Heart right ventricle (tissue), 16 donors: ENCODE measurements at regions of chr6 and their contacts with region 1.

Region 1: DNA sequence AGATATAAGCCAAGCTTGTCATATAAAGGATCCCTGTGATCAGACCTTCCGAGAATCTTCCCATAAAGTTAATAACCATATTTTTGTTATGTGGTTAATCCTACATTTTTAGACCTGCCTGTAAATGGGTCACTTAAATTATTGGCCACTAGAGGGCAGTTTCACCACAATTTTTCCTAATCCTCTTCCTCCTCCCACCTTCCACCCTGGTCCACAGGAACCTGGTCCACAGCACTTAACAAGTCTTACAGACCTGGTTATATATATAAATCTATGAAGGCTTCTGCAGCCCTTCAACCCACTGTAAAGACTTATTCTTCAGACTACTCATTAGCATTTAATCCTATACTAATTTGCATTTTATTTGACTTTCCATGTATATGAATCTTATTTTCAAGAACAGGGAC is 28.3 kb downstream of the MRS2 start:
- DNase-seq: peak in 1 of 2 donors; percentile 9
- ATAC-seq: peak in 4 of 8 donors; percentile 56 to 63 (median 60)
- H3K4me3 ChIP-seq: no peak overlapping the region
- H3K27ac ChIP-seq: no peak overlapping the region
- H3K4me1 ChIP-seq: no peaks in the 10 kb centered on the region
- H3K27me3 ChIP-seq: no peaks in the 10 kb centered on the region
- CTCF ChIP-seq: peak; percentile 41 to 80 (median 71)

Region 2: GRCh38 chr6:24520929-24521546 is 90.0 kb after region 1 on chr6:
- intact Hi-C with region 1: loop called in 2 of 10 experiments (anchors 10 kb)
- DNase-seq: peak; percentile 14 to 33
- ATAC-seq: peak in 7 of 8 donors; percentile 65 to 85 (median 77)
- H3K4me3 ChIP-seq: no peak overlapping the region
- H3K27ac ChIP-seq: no peak overlapping the region
- H3K4me1 ChIP-seq: no peaks in the 10 kb centered on the region
- H3K27me3 ChIP-seq: no peaks in the 10 kb centered on the region
- CTCF ChIP-seq: peak in 8 of 9 donors; percentile 19 to 76 (median 55)

Region 3: GRCh38 chr6:24689964-24690363 is 258.9 kb after region 1 on chr6:
- intact Hi-C with region 1: loop called in 4 of 10 experiments (anchors 5 to 10 kb)
- DNase-seq: no peak
- ATAC-seq: peak in 1 of 8 donors; percentile 55
- H3K4me3 ChIP-seq: no peak overlapping the region
- H3K27ac ChIP-seq: no peak overlapping the region
- H3K4me1 ChIP-seq: peaks cover 0 to 23% (median 12%) of the 10 kb centered on the region in 9 donors
- H3K27me3 ChIP-seq: no peaks in the 10 kb centered on the region
- CTCF ChIP-seq: no peak

Region 4: GRCh38 chr6:24699521-24700359 is 268.7 kb after region 1 on chr6:
- intact Hi-C with region 1: loop called in 5 of 10 experiments (anchors 5 to 10 kb)
- DNase-seq: no peak
- ATAC-seq: peak in 1 of 8 donors; percentile 30
- H3K4me3 ChIP-seq: no peak overlapping the region
- H3K27ac ChIP-seq: peak overlapping the region in 3 of 10 donors; percentile 11 to 24 (median 12)
- H3K4me1 ChIP-seq: peaks cover 0 to 18% (median 4%) of the 10 kb centered on the region in 9 donors
- H3K27me3 ChIP-seq: no peaks in the 10 kb centered on the region
- CTCF ChIP-seq: no peak

Region 5: GRCh38 chr6:24766680-24767462 is 335.8 kb after region 1 on chr6:
- intact Hi-C with region 1: loop called in 1 of 10 experiments (anchors 10 kb)
- DNase-seq: no peak
- ATAC-seq: peak in 3 of 8 donors; percentile 39 to 67 (median 52)
- H3K4me3 ChIP-seq: no peak overlapping the region
- H3K27ac ChIP-seq: no peak overlapping the region
- H3K4me1 ChIP-seq: peaks cover 0 to 3% (median 0%) of the 10 kb centered on the region in 9 donors
- H3K27me3 ChIP-seq: no peaks in the 10 kb centered on the region
- CTCF ChIP-seq: peak in 8 of 9 donors; percentile 22 to 60 (median 50)